ENCODE measurements at regions of chr11 and their contacts with region 1.

Region 1: DNA sequence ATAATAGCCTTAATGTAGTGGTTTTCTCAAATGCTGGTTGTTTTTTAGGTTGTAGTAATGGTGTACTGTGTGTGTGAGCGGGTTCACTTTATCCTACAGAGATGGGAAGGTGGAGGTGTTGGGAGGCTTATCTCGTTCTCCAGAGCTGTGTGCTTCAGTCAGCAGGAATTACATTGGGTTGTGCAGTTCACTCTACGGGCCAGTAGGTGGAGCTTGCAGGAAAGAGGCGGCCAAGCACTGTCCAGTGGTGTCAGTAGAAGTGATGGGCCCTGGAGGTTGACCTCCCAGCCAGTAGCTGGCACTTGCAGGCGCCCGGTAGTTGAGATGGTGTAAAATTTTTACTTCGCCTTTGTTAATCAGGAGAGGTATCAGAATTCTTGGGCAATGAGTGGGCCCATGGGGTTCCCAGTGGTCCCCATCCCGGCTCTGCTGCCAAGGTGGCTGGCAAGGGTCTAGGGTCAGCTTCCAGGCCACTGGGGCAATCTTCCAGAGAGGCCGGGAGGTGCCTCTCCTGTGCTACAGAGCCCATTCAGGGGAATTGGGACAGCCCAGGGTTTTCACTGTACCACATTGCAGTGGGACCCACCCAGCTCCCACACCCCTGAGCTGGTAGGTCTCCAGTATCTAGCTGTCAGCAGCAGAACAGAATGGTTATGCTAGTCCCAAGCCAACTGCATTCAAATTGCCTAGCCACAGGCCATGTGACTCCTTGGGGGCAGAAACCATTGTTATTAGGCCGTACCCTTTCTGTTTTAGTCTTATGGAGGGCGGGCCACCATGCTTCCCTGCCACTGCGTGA is 43.9 kb downstream of the BIRC2 start:
- DNase-seq: peak; percentile 72
- H3K4me3 Mint-ChIP-seq: no peak overlapping the region
- H3K27ac Mint-ChIP-seq: peak overlapping the region; percentile 60
- H3K4me1 Mint-ChIP-seq: peaks cover 40% of the 10 kb centered on the region
- H3K27me3 Mint-ChIP-seq: no peaks in the 10 kb centered on the region

Region 2: GRCh38 chr11:102197670-102198139 is 193.2 kb before region 1 on chr11:
- CTCF ChIA-PET with region 1: no interaction called
- POLR2A ChIA-PET with region 1: no interaction called
- intact Hi-C with region 1: no loop called
- DNase-seq: no peak
- H3K4me3 Mint-ChIP-seq: no peak overlapping the region
- H3K27ac Mint-ChIP-seq: no peak overlapping the region
- H3K4me1 Mint-ChIP-seq: no peaks in the 10 kb centered on the region
- H3K27me3 Mint-ChIP-seq: peaks cover 5% of the 10 kb centered on the region

Region 3: DNA sequence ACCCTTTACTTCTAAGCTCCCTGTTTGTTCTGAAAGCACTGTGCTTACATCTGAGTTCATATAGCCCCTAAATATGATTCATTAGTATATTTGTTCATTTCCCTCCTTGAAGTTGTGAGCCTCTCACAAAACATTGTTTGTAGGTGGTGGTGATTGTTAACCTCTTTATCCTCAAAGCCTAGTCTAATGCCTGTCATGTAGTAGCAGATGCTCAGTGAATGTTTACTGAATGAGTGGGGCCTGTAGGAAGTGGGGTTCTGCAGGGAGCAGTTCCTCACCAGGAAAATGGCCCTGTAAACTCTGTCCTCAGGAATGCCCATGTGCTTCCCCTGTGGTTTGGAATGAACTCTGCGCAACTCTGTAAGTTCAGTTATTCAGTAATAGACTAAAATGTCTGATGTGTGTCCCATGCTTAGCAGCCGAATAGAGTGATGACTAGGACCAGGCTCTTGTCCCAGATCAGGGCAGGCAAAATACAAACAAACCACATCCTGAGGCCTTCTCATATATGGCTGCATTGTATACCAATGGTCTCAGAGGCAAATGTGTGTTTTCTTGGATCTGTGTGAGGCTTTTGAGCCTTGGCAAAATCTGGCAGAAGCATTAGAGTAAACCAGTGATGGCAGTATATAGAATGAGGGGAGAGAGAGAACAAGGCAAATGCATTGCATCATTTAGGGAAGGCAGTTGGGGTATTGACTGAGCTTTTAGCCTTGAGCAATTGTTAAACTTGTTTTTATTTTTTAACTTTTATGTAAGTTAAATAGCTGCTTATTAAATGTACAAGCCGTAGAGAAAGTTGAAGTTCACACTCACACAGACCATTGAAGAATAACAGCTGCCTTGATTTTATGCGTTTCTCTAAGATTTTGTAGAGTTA is 164.9 kb before region 1 on chr11:
- CTCF ChIA-PET with region 1: no interaction called
- POLR2A ChIA-PET with region 1: no interaction called
- intact Hi-C with region 1: no loop called
- DNase-seq: no peak
- H3K4me3 Mint-ChIP-seq: no peak overlapping the region
- H3K27ac Mint-ChIP-seq: no peak overlapping the region
- H3K4me1 Mint-ChIP-seq: no peaks in the 10 kb centered on the region
- H3K27me3 Mint-ChIP-seq: peaks cover 2% of the 10 kb centered on the region

Region 4: GRCh38 chr11:102287964-102288724 is 102.7 kb before region 1 on chr11:
- CTCF ChIA-PET with region 1: interaction called, 15 read pairs
- POLR2A ChIA-PET with region 1: no interaction called
- intact Hi-C with region 1: loop called (anchors 5 kb)
- DNase-seq: peak; percentile 33
- H3K4me3 Mint-ChIP-seq: peak overlapping the region; percentile 38
- H3K27ac Mint-ChIP-seq: no peak overlapping the region
- H3K4me1 Mint-ChIP-seq: peaks cover 25% of the 10 kb centered on the region
- H3K27me3 Mint-ChIP-seq: no peaks in the 10 kb centered on the region

Region 5: GRCh38 chr11:102367364-102367763 is 23.5 kb before region 1 on chr11:
- CTCF ChIA-PET with region 1: interaction called, 12 read pairs
- POLR2A ChIA-PET with region 1: no interaction called
- intact Hi-C with region 1: no loop called
- DNase-seq: no peak
- H3K4me3 Mint-ChIP-seq: no peak overlapping the region
- H3K27ac Mint-ChIP-seq: peak overlapping the region; percentile 15
- H3K4me1 Mint-ChIP-seq: peaks cover 22% of the 10 kb centered on the region
- H3K27me3 Mint-ChIP-seq: no peaks in the 10 kb centered on the region

Region 6: DNA sequence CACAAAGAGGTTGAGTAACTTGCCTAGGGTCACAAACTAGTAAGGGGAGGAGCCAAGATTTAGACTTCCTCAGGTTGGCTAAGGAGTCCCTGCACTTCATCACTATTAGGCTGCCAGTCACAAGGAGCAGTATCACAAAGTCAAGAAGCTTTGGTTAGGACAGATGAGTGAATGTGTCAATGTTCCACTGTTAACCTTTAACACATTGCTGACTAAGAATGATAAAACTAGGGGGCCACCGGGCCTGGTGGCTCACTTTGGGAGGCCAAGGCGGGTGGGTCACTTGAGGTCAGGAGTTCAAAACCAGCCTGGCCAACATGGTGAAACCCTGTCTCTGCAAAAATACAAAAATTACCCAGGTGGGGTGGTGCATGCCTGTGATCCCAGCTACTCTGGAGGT is 29.7 kb after region 1 on chr11:
- CTCF ChIA-PET with region 1: interaction called, 17 read pairs
- POLR2A ChIA-PET with region 1: interaction called, 3 read pairs
- intact Hi-C with region 1: loop called (anchors 1 kb)
- DNase-seq: peak; percentile 67
- H3K4me3 Mint-ChIP-seq: no peak overlapping the region
- H3K27ac Mint-ChIP-seq: peak overlapping the region; percentile 52
- H3K4me1 Mint-ChIP-seq: peaks cover 93% of the 10 kb centered on the region
- H3K27me3 Mint-ChIP-seq: no peaks in the 10 kb centered on the region

Region 7: GRCh38 chr11:102488208-102488607 is 97.3 kb after region 1 on chr11:
- CTCF ChIA-PET with region 1: interaction called, 12 read pairs
- POLR2A ChIA-PET with region 1: no interaction called
- intact Hi-C with region 1: no loop called
- DNase-seq: no peak
- H3K4me3 Mint-ChIP-seq: no peak overlapping the region
- H3K27ac Mint-ChIP-seq: peak overlapping the region; percentile 16
- H3K4me1 Mint-ChIP-seq: peaks cover 32% of the 10 kb centered on the region
- H3K27me3 Mint-ChIP-seq: no peaks in the 10 kb centered on the region

Region 8: GRCh38 chr11:102614485-102614884 is 223.6 kb after region 1 on chr11:
- CTCF ChIA-PET with region 1: interaction called, 36 read pairs
- POLR2A ChIA-PET with region 1: no interaction called
- intact Hi-C with region 1: loop called (anchors 2 kb)
- DNase-seq: no peak
- H3K4me3 Mint-ChIP-seq: no peak overlapping the region
- H3K27ac Mint-ChIP-seq: no peak overlapping the region
- H3K4me1 Mint-ChIP-seq: peaks cover 10% of the 10 kb centered on the region
- H3K27me3 Mint-ChIP-seq: no peaks in the 10 kb centered on the region

Measured in activated CD4-positive, alpha-beta memory T cell treated with anti-CD3 and anti-CD28 coated beads for 36 hours (primary cell).